ENCODE measurements at regions of chr14 and their contacts with region 1.

Region 1: DNA sequence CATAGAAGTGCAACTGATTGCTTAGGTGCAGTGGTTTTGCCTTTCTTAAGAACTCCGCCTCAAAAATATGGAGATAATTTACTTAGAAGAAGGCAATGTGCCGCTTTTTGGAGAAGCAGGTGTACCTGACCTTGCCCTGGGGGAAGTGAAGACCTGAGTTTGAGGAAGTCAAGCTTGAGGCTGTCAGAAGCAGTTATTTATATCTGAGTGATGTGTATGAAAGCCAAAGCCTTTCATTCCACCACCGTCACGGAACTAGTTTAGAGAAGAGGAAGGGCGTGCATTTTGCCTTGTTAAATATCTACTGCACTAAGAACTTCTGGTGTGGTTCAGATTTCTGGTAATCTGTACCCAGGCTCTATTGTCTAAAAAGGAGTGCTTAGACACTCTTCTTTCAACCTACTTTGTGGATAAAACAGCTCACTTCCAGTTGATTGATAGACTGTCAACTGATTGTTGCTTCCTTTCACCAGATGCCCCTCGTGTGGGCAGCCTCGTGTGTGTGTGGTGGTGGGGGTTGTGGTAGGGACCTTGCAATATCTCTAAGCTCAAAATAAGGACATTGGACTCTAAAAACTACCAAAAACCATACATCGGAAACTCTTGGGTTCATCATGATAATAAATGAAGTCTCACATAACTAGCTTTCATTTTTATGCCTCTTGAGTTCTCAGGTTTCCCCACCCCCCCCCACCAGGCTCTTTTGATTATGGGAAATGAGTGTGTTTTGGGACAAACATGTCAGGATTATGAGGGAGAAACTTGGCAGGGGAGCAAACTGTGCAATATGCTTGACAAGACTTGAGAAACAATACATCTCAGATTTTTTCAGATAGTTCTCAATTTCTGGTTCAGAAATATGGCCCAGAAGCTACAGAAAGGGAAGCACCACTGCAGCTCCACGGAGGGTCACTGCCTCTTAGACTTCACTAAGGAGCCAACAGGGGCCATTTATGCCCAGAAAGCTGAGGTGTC is 78.6 kb downstream of the ARF6 start:
- DNase-seq: peak in 32 of 35 experiments; percentile 26 to 81 (median 60)
- ATAC-seq: peak; percentile 86 to 91 (median 89)
- H3K4me3 ChIP-seq: peak overlapping the region in 1 of 2 donors; percentile 28
- H3K4me3 Mint-ChIP-seq: peak overlapping the region; percentile 58 to 88 (median 75)
- H3K27ac ChIP-seq: peak overlapping the region; percentile 95
- H3K27ac Mint-ChIP-seq: peak overlapping the region; percentile 92 to 99
- H3K4me1 ChIP-seq: peaks cover 40 to 67% of the 10 kb centered on the region in 2 experiments
- H3K4me1 Mint-ChIP-seq: peaks cover 58 to 70% (median 62%) of the 10 kb centered on the region in 3 donors
- H3K27me3 ChIP-seq: no peaks in the 10 kb centered on the region
- H3K27me3 Mint-ChIP-seq: no peaks in the 10 kb centered on the region

Region 2: DNA sequence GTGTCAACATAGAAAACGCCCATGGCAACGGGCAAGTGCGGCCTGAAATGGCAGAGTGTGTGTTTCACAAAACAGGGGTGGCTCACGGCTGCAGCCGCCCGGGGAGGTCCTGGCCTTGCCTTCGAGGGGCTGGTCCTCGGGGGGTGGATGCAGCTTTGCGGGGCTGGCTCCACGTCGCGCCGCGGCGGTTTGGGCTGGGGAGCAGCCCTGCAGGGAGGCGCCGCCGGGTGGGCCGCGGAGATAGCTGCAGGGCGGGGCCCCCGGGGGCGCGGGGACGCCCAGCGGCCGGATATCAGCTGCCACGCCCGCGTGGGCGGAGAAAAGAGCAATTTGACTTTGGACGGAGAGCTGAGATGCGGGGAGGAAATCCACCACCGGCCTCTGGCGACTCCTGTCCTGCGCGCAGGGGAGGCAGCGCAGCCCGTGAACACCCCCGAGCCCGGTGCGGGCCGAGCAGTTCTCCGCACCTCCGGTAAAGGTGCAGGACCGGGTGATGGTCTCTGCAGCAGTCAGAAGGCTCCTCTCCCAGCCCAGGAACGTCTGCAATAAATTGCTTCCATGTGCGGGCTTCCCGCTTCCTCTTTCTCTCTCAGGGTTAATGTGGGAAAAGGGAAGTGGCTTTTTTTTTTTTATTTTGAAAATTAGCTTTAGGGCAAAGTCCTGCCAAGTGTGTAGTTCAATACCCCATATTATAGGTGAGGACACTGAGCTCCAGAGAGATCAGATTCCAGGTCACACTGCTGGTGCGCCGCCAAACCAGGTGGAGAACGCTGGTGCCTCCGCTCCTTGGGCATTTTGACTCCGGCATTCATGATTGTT is 32.0 kb after region 1 on chr14:
- CTCF ChIA-PET with region 1: interaction called in 1 of 2 experiments, 7 read pairs
- POLR2A ChIA-PET with region 1: interaction called, 8 to 11 read pairs
- DNase-seq: peak; percentile 59 to 86 (median 72)
- ATAC-seq: peak; percentile 40 to 47 (median 44)
- H3K4me3 ChIP-seq: peak overlapping the region; percentile 60 to 83
- H3K4me3 Mint-ChIP-seq: peak overlapping the region; percentile 73 to 78 (median 75)
- H3K27ac ChIP-seq: peak overlapping the region; percentile 100
- H3K27ac Mint-ChIP-seq: peak overlapping the region; percentile 96 to 98
- H3K4me1 ChIP-seq: peaks cover 42 to 59% of the 10 kb centered on the region in 2 experiments
- H3K4me1 Mint-ChIP-seq: peaks cover 46 to 62% (median 52%) of the 10 kb centered on the region in 3 donors
- H3K27me3 ChIP-seq: no peaks in the 10 kb centered on the region
- H3K27me3 Mint-ChIP-seq: no peaks in the 10 kb centered on the region

Region 3: DNA sequence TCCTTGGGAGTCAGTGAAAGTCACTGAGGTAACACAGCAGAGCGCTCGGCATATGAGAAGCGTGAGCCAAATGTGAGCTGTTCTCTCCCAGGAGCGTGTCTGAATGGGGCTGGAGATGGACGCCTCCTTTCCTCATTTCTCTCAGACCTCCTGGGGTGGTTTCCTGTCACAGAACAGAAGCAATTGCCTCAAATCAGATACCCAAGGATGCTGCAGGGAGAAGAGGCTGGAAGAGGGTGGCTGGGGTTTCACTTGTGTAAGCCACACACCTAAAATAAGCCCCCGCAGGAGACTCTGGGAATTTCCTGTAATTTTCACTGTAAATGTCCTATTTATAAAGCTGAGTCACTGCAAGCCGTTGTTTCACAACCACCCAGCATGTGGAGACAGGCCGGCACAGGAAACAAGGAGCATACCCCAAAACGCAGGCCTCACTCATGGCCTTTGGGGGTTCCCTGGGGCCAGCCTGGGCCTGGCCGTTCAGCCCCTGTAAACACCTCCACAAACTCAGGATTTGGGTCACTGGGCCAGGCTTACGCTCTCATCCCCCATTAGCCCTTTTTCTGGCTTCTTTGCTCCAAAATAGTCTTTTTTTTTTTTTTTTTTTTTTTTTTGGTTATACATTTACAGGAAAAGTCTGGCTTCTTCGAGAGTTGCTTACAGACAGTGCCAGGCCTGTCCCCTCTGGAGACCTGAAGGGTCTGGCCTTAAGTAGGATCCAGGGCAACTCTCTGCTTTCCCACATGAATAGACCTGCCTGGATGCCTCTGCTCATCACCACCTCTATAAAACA is 89.6 kb after region 1 on chr14:
- CTCF ChIA-PET with region 1: interaction called, 3 to 11 read pairs
- POLR2A ChIA-PET with region 1: interaction called, 4 to 6 read pairs
- DNase-seq: peak in 9 of 35 experiments; percentile 11 to 66 (median 34)
- ATAC-seq: no peak
- H3K4me3 ChIP-seq: peak overlapping the region in 1 of 2 donors; percentile 41
- H3K4me3 Mint-ChIP-seq: peak overlapping the region; percentile 70 to 90 (median 88)
- H3K27ac ChIP-seq: peak overlapping the region; percentile 93
- H3K27ac Mint-ChIP-seq: peak overlapping the region; percentile 100
- H3K4me1 ChIP-seq: peaks cover 44 to 76% of the 10 kb centered on the region in 2 experiments
- H3K4me1 Mint-ChIP-seq: peaks cover 75 to 92% (median 82%) of the 10 kb centered on the region in 3 donors
- H3K27me3 ChIP-seq: no peaks in the 10 kb centered on the region
- H3K27me3 Mint-ChIP-seq: no peaks in the 10 kb centered on the region

Region 4: DNA sequence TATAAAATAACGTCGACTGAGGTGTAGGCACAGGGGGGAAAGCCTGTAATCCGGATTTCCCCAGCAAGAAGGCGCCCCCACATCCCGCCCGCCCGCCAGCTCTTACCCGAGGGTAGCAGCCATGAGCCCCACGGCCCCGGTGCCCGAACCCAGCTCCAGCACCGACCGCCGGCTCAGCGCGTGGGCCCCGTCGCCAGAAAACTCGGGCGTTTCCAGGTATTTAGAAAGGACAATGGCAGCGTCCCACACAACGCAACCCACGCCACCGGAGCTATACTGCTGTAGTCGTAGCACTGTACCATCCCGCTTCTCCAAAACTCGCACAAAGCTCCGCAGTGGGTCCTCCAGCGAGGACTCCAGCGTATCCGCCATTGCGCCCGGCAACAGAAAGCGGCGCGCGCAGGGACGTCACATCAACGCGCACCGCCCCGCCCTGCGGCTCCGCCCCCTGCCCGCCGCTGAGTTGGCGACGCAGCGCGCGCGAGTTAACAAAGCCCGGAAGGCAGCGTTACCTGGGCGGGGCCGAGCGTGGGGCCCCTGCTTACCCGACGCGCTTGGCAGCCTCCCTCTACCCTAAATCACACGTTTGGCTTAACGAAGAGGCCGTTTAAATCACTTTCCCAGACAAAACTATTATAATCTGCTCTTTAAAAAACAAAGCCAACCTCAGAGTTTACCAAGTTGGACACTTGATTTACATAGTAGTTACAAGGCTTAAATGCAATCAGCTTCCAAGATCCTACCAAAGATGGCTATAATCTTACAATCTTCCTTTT is 144.9 kb after region 1 on chr14 and contains the start of gene VCPKMT:
- CTCF ChIA-PET with region 1: interaction called in 1 of 2 experiments, 3 read pairs
- POLR2A ChIA-PET with region 1: interaction called in 1 of 2 experiments, 13 read pairs
- DNase-seq: peak; percentile 90 to 98 (median 95)
- ATAC-seq: peak; percentile 98 to 100 (median 99)
- H3K4me3 ChIP-seq: peak within 1 kb of the TSS; percentile 75 to 96
- H3K4me3 Mint-ChIP-seq: peak within 1 kb of the TSS; percentile 83 to 97 (median 94)
- H3K27ac ChIP-seq: peak within 1 kb of the TSS; percentile 97
- H3K27ac Mint-ChIP-seq: peak within 1 kb of the TSS; percentile 95 to 99
- H3K4me1 ChIP-seq: peaks cover 5 to 16% of the 10 kb centered on the region in 2 experiments
- H3K4me1 Mint-ChIP-seq: peaks cover 23 to 39% (median 34%) of the 10 kb centered on the region in 3 donors
- H3K27me3 ChIP-seq: no peaks in the 10 kb centered on the region
- H3K27me3 Mint-ChIP-seq: no peaks in the 10 kb centered on the region
- total RNA-seq, gene VCPKMT: 16.3 to 24.4 (median 18.3) TPM

Region 5: DNA sequence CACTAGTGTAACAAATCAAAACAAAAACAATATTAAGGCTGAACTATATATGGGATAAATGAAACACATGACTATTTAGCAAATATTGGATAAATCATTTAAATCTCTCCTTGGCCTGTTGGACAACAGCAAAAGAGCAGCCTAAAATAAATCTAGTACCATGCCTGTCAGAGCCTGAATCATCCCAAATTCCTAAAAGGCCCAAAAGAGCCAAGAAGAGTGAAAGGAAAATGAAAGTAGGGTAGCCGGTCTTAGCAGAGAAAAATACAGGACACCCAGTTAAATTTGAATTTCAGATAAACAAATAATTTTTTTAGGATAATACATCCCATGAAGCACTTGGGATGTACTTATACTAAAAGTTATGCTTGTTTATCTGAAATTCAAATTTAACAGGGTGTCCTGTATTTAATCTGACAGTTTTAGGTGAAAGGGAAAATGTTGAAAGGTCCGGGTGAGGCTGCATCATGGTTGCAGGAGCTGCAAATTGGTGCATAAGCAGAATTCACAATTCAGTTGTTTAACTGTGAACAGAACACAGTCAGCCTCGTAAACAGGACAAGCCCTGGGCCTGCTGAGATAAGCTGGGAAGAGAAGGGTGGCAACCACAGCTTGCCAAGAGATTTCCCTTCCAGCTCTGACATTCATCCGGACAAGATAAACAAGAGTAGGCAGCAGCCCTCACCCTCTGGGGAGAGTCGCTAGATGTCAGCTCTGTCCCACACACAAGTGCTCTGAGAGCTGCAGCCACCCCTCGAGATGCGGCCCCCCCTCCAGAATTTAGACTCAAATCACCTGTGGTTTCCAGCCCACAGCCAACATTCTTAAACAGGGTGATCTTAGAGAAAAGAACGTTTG is 371.0 kb after region 1 on chr14:
- CTCF ChIA-PET with region 1: no interaction called
- POLR2A ChIA-PET with region 1: no interaction called
- DNase-seq: peak in 28 of 35 experiments; percentile 10 to 60 (median 32)
- ATAC-seq: peak in 3 of 4 experiments; percentile 68 to 95 (median 77)
- H3K4me3 ChIP-seq: no peak overlapping the region
- H3K4me3 Mint-ChIP-seq: no peak overlapping the region
- H3K27ac ChIP-seq: no peak overlapping the region
- H3K27ac Mint-ChIP-seq: no peak overlapping the region
- H3K4me1 ChIP-seq: peaks cover 0 to 4% of the 10 kb centered on the region in 2 experiments
- H3K4me1 Mint-ChIP-seq: peaks cover 0 to 24% (median 23%) of the 10 kb centered on the region in 3 donors
- H3K27me3 ChIP-seq: no peaks in the 10 kb centered on the region
- H3K27me3 Mint-ChIP-seq: no peaks in the 10 kb centered on the region

Measured in T-cell (primary cell).